Heart left ventricle (tissue), 16 donors: ENCODE measurements at regions of chr3 and their contacts with region 1.

Region 1: DNA sequence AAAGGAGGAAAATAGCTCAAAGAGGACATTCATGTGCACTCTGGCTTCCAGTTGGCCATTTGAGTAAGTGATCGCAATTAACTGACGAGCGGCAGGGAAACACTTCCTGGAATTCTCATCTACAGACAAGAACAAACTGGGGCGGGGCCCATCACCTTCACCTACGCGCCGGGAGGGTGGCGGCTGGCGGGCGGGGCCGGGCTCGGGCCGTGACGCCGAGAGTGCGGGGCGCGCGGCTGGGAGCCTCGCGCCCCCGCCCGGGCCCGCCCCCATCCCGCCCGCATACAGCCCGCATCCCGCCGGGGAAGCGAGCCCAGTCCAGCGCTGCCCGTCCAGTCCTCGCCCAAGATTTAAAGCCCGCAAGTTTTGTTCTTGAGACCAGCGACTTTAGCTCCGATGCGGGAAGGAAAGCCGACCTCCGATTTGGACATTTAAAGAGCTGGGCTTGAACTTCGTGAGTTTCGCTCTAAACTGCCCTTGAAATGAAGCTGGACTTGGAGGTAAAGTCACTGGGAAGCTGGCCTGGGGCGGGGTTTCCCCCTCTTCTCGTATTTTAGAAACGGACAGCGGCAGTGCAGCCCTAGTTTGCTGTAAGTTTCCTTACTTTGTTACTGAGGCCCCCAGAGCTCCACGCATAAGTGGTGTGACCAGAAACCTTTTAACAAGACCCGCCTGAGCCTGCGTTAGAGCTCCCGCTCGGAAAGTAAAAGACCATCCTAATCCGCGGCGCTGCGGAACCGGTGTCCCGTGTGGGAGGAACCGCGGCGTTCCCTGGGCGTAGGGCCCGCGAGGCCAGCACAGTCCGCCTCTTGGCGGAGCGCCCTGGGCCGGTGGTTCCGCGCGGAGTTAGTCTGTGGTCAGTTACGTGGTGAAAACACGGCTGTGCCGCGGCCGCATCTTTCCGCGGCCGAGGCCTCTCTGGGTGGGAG is at the start of gene B3GNT5:
- DNase-seq: peak; percentile 75 to 89 (median 81)
- ATAC-seq: peak; percentile 74 to 90 (median 86)
- H3K4me3 ChIP-seq: peak within 1 kb of the TSS; percentile 61 to 96 (median 82)
- H3K27ac ChIP-seq: peak within 1 kb of the TSS; percentile 69 to 98 (median 90)
- H3K4me1 ChIP-seq: peaks cover 0 to 17% (median 2%) of the 10 kb centered on the region in 12 donors
- H3K27me3 ChIP-seq: no peaks in the 10 kb centered on the region
- CTCF ChIP-seq: no peak
- POLR2A ChIP-seq: no peak
- total RNA-seq, gene B3GNT5: 0.87 to 12.3 (median 3.6) TPM

Region 2: DNA sequence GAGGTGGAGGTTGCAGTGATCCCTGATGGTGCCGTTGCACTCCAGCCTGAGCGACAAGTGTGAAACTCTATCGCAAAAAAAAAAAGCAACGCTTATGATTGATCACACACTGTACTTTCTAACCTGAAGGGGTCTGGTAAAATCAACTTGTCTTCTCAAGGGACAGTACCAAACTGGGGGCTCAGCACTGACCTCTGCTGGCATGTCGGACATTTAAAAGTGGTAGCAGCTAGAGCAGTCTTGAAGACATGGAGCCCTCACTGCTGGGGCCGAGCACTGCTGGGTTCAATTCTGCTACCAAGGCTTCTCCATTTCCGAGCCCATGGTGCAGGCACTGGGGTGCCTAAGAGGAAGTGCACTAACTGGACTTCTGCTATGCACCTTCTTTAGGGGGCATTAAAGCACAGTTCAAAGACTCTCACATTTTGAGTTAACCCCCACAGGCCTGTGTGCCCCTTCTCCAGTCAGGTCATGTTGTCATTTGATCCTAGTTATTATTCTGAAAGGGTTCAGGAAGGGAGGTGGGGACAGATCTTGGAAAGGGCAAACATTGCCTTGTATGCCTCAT is 64.3 kb before region 1 on chr3:
- intact Hi-C with region 1: loop called in 4 of 10 experiments (anchors 5 kb)
- DNase-seq: peak in 2 of 5 donors; percentile 33
- ATAC-seq: peak in 3 of 4 donors; percentile 29 to 49 (median 49)
- H3K4me3 ChIP-seq: no peak overlapping the region
- H3K27ac ChIP-seq: no peak overlapping the region
- H3K4me1 ChIP-seq: peaks cover 0 to 19% (median 0%) of the 10 kb centered on the region in 12 donors
- H3K27me3 ChIP-seq: no peaks in the 10 kb centered on the region
- CTCF ChIP-seq: peak in 10 of 12 donors; percentile 18 to 52 (median 41)
- POLR2A ChIP-seq: no peak

Region 3: DNA sequence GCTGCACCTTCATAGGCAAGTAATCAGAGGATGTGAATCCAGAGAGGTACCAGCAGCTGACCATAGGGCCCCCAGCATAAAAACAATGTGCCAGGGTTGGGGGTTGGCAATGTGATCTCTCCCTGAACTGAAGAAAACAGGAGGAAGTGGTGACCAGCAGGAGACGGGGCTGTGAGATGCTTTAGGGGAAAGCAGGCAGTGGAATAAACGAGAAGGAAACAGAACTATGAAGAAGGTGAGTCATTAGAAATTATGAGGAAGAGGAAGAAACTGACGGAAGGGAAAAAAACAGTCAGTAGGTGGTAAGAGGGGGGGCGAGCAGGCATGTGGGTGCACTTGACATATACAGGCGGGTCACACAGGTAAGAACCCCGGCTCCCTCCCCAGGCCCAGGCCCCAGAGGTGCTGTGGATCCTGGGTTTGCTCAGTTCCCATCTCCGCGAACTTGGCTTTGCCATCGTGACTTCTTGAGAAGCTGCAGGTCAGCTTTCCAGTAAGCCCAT is 42.3 kb before region 1 on chr3:
- intact Hi-C with region 1: loop called in 2 of 10 experiments (anchors 2 to 5 kb)
- DNase-seq: peak in 2 of 5 donors; percentile 31 to 38
- ATAC-seq: peak; percentile 39 to 69 (median 60)
- H3K4me3 ChIP-seq: peak overlapping the region in 4 of 12 donors; percentile 1 to 18 (median 11)
- H3K27ac ChIP-seq: peak overlapping the region in 10 of 12 donors; percentile 39 to 85 (median 78)
- H3K4me1 ChIP-seq: peaks cover 0 to 36% (median 5%) of the 10 kb centered on the region in 12 donors
- H3K27me3 ChIP-seq: no peaks in the 10 kb centered on the region
- CTCF ChIP-seq: no peak
- POLR2A ChIP-seq: no peak

Region 4: DNA sequence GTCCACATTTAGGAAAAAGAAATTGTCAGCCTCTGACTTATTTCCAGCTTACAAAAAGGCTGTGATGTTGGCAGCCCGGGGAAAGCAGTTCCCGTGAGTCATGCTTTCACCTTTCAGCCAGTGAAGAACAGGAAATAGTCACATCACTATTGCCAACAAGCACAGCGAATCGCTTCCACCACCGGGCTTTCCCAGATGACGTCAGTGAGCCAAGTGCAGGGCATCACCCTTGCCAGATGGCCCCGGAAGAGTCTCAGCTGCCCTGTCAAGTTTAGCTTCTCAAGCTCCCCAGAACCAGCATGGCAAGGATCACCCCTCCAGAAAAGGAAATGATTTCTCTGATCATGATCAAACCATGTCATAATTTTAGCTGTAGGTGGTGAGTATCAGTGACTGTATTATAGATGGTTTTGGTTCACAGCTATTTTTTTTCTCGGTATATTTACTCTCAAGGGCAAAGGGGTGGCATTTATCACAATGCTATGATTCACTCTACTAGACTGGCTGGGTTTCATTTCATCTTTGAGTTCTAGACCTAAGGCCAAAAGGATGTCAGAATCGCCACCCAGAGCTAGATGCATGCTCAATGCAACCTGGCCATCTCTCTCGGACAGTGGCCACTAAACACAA is 32.7 kb after region 1 on chr3:
- intact Hi-C with region 1: loop called in 3 of 10 experiments (anchors 5 kb)
- DNase-seq: peak; percentile 81 to 92 (median 85)
- ATAC-seq: peak; percentile 85 to 98 (median 96)
- H3K4me3 ChIP-seq: peak overlapping the region in 6 of 12 donors; percentile 2 to 19 (median 10)
- H3K27ac ChIP-seq: peak overlapping the region in 11 of 12 donors; percentile 41 to 79 (median 68)
- H3K4me1 ChIP-seq: peaks cover 2 to 37% (median 13%) of the 10 kb centered on the region in 12 donors
- H3K27me3 ChIP-seq: no peaks in the 10 kb centered on the region
- CTCF ChIP-seq: no peak
- POLR2A ChIP-seq: no peak

Region 5: GRCh38 chr3:183298701-183299153 is 45.5 kb after region 1 on chr3:
- intact Hi-C with region 1: loop called in 2 of 10 experiments (anchors 5 kb)
- DNase-seq: peak; percentile 47 to 76 (median 73)
- ATAC-seq: peak; percentile 41 to 91 (median 80)
- H3K4me3 ChIP-seq: no peak overlapping the region
- H3K27ac ChIP-seq: no peak overlapping the region
- H3K4me1 ChIP-seq: peaks cover 0 to 32% (median 0%) of the 10 kb centered on the region in 12 donors
- H3K27me3 ChIP-seq: no peaks in the 10 kb centered on the region
- CTCF ChIP-seq: no peak
- POLR2A ChIP-seq: no peak

Region 6: DNA sequence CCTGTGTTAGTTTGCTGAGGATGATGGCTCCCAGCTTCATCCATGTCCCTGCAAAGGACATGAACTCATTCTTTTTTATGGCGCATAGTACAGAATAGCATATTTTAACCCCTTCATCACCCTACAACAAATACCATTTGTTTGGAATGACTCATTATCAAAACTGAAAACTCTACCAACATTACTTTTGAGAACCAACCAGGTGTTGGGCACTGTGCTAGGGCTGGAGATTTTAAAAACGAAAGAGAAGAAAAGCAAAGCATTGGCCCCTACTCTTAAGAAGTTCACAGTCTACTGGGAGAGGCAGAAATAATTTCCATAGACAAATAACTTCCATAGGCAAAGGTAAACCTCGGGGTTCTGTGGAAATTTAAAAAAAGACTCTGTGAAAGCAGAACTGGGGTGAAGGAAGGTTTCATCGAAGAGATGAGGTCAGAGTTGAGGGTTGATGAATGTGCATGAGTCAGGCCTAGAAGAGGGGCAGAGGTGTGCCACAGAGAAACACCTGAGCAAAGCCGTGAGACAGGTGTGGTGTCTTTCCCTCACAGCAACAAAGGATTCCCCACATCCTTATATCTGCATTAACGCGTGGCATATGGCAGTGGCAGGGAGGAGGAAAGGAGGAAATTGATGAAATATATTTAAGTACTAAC is 124.2 kb after region 1 on chr3:
- intact Hi-C with region 1: loop called in 6 of 10 experiments (anchors 2 to 10 kb)
- DNase-seq: no peak
- ATAC-seq: no peak
- H3K4me3 ChIP-seq: no peak overlapping the region
- H3K27ac ChIP-seq: no peak overlapping the region
- H3K4me1 ChIP-seq: peaks cover 0 to 36% (median 0%) of the 10 kb centered on the region in 12 donors
- H3K27me3 ChIP-seq: no peaks in the 10 kb centered on the region
- CTCF ChIP-seq: no peak
- POLR2A ChIP-seq: no peak

Region 7: DNA sequence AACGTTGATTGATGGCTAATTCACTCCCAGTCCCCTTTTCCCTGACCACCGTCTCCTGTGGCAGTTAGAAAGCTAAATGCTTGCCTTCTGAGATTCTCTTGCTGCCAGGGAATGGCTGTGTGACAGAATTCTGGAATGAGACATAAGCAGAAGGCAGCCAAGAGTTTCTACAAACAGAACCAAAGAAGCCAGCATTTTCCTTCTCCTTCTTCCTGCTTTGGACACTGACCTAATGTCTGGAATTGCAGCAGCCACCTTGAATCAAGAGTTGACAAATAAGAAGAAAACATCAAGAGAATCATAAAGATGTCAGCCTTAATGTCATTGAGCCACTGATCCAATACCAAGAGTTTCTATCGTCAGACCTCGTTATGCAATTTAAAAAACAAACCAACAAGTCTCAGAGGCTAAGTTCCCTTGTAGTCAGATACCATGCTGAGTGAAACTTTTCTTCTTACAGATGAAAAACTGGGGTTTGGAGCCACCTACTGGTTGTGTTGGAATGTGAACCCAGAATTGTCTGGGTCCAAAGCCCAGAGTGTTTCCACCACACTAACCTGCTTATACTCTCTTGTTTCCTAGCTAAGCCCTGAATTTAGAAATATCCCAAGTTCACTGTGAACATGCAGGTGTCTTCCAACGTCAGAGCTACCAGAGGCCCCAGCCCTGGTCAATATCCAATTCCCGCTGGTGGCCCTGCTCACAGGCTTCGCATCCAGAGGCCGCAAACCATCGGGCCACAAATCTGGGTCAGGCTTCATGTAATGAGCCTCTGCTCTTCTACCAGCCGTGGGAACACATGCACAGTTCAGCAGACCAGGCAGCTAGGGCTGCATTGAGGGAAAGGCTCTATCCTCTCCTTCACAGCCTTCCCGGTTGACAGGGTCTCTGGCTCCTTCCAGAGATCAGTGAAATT is 132.7 kb after region 1 on chr3:
- intact Hi-C with region 1: loop called in 5 of 10 experiments (anchors 2 to 10 kb)
- DNase-seq: peak in 2 of 5 donors; percentile 27 to 46
- ATAC-seq: peak in 3 of 4 donors; percentile 83 to 89 (median 87)
- H3K4me3 ChIP-seq: no peak overlapping the region
- H3K27ac ChIP-seq: no peak overlapping the region
- H3K4me1 ChIP-seq: peaks cover 0 to 16% (median 0%) of the 10 kb centered on the region in 12 donors
- H3K27me3 ChIP-seq: no peaks in the 10 kb centered on the region
- CTCF ChIP-seq: peak; percentile 59 to 80 (median 70)
- POLR2A ChIP-seq: no peak